ENCODE measurements at regions of chr12 and their contacts with region 1.

Region 1: GRCh38 chr12:106955377-106956047 is at the start of gene TMEM263:
- DNase-seq: peak; percentile 62
- H3K4me3 ChIP-seq: peak within 1 kb of the TSS; percentile 96
- CTCF ChIP-seq: no peak

Region 2: DNA sequence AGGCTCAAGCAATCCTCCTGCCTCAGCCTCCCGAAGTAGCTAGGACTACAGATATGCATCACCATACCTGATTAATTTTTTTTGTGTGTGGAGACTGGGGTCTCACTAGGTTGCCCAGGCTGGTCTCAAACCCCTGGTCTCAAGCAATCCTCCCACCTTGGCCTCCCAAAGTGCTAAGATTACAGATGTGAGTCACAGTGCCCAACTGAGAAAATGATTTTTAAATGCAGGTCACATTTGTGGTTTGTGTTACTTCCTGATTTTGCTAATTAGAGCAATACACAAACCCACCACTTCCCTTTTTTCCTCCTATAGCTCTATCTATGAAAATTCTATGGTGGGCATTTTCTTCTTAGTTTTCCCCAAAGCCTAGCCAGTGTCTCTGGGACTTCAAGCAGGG is 45.3 kb before region 1 on chr12:
- CTCF ChIA-PET with region 1: no interaction called
- POLR2A ChIA-PET with region 1: no interaction called
- DNase-seq: no peak
- H3K4me3 ChIP-seq: no peak overlapping the region
- CTCF ChIP-seq: no peak

Region 3: DNA sequence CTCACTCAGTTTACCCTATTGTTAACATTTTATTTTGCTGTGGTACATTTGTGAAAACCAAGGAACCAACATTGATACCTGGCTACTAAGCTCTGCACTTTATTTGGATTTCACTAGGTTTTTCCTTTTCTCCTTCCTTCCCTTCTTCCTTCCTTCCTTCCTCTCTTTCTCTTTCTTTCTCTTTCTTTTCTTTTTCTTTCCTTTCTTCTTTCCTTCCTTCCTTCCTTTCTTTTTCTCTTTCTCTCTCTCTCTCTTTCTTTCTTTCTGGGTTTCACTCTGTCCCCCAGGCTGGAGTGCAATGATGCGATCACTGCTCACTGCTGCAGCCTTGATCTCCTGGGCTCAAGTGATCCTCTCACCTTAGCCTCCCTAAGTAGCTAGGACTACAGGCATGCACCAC is 28.9 kb before region 1 on chr12:
- CTCF ChIA-PET with region 1: no interaction called
- POLR2A ChIA-PET with region 1: no interaction called
- DNase-seq: no peak
- H3K4me3 ChIP-seq: no peak overlapping the region
- CTCF ChIP-seq: no peak

Region 4: GRCh38 chr12:106974511-106974910 is 19.0 kb after region 1 on chr12:
- CTCF ChIA-PET with region 1: interaction called, 3 read pairs
- POLR2A ChIA-PET with region 1: interaction called, 12 read pairs
- DNase-seq: no peak
- H3K4me3 ChIP-seq: no peak overlapping the region
- CTCF ChIP-seq: no peak

Region 5: GRCh38 chr12:106986625-106987430 is 31.3 kb after region 1 on chr12 and contains the start of gene MTERF2:
- CTCF ChIA-PET with region 1: no interaction called
- POLR2A ChIA-PET with region 1: interaction called, 16 read pairs
- DNase-seq: peak; percentile 57
- H3K4me3 ChIP-seq: peak within 1 kb of the TSS; percentile 81
- CTCF ChIP-seq: no peak

Region 6: DNA sequence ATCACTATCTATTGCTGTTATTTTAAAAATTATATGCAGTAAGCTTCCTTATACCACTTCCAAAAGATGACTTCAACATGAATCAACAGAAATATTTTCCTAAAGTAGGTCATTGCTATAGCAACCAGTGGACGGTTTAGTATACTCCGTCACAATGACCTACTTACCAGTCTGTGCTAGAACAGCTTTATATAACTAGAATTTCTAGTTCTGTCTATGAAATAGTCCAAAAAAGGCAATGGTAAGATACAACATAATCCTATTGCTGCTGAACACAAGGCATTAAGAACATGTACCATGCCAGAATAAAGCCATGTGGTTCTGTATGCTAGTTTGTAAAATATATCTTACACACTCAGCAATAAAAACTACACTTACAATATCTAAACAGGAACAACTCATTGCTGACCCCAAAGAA is 72.1 kb after region 1 on chr12:
- CTCF ChIA-PET with region 1: no interaction called
- POLR2A ChIA-PET with region 1: no interaction called
- DNase-seq: peak; percentile 93
- H3K4me3 ChIP-seq: no peak overlapping the region
- CTCF ChIP-seq: no peak

Measured in AG04449 (cell line).